GM13976 (cell line): ENCODE measurements at regions of chr16 and their contacts with region 1.

Region 1: GRCh38 chr16:55824473-55825000 is 8.4 kb downstream of the CES1 start:
- DNase-seq: no peak
- CTCF ChIP-seq: no peak

Region 2: DNA sequence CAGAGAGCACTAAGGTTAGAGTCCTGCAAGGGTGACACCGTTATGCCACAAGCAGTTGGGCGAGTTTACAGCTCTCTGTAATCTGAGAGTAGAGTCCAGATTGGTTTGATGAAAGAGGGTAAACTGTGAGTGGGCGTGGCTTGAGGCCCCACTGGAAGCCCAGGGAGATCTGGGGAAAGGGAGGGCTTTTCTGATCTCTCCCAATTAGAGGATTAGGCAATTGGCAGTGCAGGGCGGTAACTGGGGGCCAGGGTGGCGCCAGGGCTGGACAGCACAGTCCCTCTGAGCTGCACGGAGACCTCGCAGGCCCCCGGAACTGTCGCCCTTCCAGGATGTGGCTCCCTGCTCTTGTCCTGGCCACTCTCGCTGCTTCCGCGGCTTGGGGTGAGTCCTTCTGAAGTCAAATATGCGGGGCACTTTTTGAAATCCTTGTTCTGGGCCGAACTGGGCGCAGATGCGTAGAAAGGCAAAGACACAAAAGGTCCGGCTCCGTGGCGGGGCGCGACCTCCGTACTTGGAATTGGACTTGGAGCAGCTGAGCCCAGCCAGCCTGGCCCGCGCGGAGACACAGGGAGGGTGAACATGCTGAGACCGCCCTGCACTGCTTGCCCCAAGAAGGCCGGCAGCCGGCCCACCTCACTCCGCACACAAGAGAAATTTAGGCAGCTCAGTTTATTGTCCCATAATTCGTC is 64.1 kb before region 1 on chr16:
- in situ Hi-C with region 1: loop called (anchors 10 kb)
- DNase-seq: no peak
- CTCF ChIP-seq: no peak